IMR-90 (cell line): ENCODE measurements at regions of chr6 and their contacts with region 1.

Region 1: DNA sequence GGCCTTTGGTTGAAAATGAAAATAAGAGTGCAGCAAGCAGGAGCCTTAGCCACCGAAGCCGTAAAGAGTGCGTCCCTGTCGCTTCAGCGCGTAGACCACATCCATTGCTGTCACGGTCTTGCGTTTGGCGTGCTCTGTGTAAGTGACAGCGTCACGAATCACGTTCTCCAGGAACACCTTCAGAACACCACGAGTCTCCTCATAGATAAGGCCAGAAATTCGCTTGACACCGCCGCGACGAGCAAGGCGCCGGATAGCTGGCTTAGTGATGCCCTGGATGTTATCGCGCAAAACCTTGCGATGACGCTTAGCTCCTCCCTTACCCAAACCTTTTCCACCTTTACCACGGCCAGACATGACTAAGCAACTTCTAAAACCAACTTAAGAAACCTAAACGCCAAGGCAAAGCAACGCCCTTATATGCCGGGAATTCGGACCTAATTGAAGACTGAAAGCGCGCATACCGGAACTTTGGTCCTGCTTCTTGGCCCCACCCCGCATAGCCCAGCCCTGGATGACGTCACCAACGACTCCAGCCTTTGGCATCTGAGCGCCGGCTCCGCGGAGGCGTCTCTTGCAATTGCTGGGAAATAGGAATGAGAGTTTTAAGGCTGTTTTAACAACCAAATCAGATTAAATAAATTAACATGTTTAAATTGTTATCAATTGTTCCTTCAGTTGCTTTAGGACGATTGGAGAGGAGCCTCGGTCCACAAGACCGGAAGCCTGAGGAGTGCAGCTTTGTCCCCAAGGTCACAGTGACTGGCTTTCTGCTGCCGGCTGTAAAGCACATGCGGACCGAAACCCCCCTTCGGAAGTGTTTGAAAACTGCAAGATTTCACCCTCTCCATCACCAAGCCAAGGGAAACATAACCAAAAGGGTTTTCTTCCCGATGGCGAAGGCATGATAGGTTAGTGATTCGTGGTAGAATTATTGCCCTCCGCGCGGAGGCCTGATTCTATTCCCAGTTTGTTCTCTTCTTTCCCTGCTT is 79.6 kb upstream of the BTN3A2 start:
- DNase-seq: peak; percentile 99
- ATAC-seq: peak; percentile 85
- H3K4me3 ChIP-seq: peak overlapping the region; percentile 59
- H3K27ac ChIP-seq: peak overlapping the region; percentile 81
- H3K4me1 ChIP-seq: peaks cover 2% of the 10 kb centered on the region
- H3K27me3 ChIP-seq: no peaks in the 10 kb centered on the region
- CTCF ChIP-seq: no peak
- POLR2A ChIP-seq: peak; percentile 94
- RAD21 ChIP-seq: no peak; the same call in 1 of the 2 replicates

Region 2: GRCh38 chr6:26216356-26216885 is 69.0 kb before region 1 on chr6:
- CTCF ChIA-PET with region 1: no interaction called
- POLR2A ChIA-PET with region 1: interaction called, 10 read pairs
- dilution Hi-C with region 1: no loop called
- in situ Hi-C with region 1: no loop called
- intact Hi-C with region 1: no loop called
- DNase-seq: peak; percentile 99
- ATAC-seq: peak; percentile 81
- H3K4me3 ChIP-seq: peak overlapping the region; percentile 47
- H3K27ac ChIP-seq: peak overlapping the region; percentile 22
- H3K4me1 ChIP-seq: no peaks in the 10 kb centered on the region
- H3K27me3 ChIP-seq: no peaks in the 10 kb centered on the region
- CTCF ChIP-seq: no peak
- POLR2A ChIP-seq: peak; percentile 99
- RAD21 ChIP-seq: no peak

Region 3: DNA sequence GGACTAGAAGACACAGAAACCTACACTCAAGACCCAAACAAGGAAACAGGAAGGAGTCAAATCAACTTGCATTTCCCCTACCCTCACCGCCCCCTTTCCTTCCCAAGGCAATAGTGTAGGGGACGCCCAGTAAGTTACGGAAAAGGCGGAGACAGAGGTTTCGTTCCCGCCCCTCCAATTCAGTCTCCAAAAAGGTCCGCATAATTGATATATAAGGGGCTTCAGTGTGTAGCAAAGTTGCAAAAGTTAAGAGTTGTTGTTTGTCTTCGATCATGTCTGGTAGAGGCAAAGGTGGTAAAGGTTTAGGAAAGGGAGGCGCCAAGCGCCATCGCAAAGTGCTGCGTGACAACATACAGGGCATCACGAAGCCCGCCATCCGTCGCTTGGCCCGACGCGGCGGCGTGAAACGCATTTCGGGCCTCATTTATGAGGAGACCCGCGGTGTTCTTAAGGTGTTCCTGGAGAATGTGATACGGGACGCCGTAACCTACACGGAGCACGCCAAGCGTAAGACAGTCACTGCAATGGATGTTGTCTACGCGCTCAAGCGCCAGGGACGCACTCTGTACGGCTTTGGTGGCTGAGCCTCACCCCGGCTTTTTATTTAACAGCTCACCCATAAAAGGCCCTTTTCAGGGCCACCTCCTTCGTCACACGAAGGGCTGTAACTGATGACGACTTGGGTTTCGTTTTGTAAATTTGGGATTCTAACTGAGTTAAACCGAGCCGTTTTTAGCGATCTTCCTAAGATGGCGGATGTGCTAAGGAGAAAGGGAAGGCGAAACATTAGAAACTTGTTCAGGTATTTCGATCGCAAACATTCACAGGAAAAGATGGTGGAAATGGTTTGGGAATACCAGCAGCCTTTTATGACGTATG is 45.0 kb before region 1 on chr6:
- CTCF ChIA-PET with region 1: no interaction called
- POLR2A ChIA-PET with region 1: interaction called, 7 read pairs
- dilution Hi-C with region 1: no loop called
- in situ Hi-C with region 1: no loop called
- intact Hi-C with region 1: loop called (anchors 2 kb)
- DNase-seq: peak; percentile 93
- ATAC-seq: peak; percentile 93
- H3K4me3 ChIP-seq: peak overlapping the region; percentile 53
- H3K27ac ChIP-seq: peak overlapping the region; percentile 89
- H3K4me1 ChIP-seq: no peaks in the 10 kb centered on the region
- H3K27me3 ChIP-seq: no peaks in the 10 kb centered on the region
- CTCF ChIP-seq: no peak
- POLR2A ChIP-seq: peak; percentile 94
- RAD21 ChIP-seq: no peak

Region 4: GRCh38 chr6:26322645-26323482 is 37.4 kb after region 1 on chr6:
- CTCF ChIA-PET with region 1: no interaction called
- POLR2A ChIA-PET with region 1: no interaction called
- dilution Hi-C with region 1: no loop called
- in situ Hi-C with region 1: no loop called
- intact Hi-C with region 1: loop called (anchors 2 kb)
- DNase-seq: peak; percentile 96
- ATAC-seq: peak; percentile 88
- H3K4me3 ChIP-seq: peak overlapping the region; percentile 61
- H3K27ac ChIP-seq: no peak overlapping the region
- H3K4me1 ChIP-seq: peaks cover 2% of the 10 kb centered on the region; the same call in 1 of the 2 replicates
- H3K27me3 ChIP-seq: no peaks in the 10 kb centered on the region
- CTCF ChIP-seq: no peak
- POLR2A ChIP-seq: no peak
- RAD21 ChIP-seq: no peak